ENCODE measurements at regions of chr2 and their contacts with region 1.

Region 1: GRCh38 chr2:40760071-40760666 is 308.3 kb upstream of the SLC8A1 start:
- DNase-seq: peak; percentile 44 to 46
- H3K4me3 ChIP-seq: no peak overlapping the region
- H3K27ac ChIP-seq: no peak overlapping the region
- H3K4me1 ChIP-seq: no peaks in the 10 kb centered on the region
- H3K27me3 ChIP-seq: no peaks in the 10 kb centered on the region
- CTCF ChIP-seq: peak; percentile 95

Region 2: GRCh38 chr2:40178971-40179370 is 581.2 kb before region 1 on chr2:
- CTCF ChIA-PET with region 1: no interaction called
- POLR2A ChIA-PET with region 1: interaction called, 10 read pairs
- intact Hi-C with region 1: no loop called
- DNase-seq: no peak
- H3K4me3 ChIP-seq: no peak overlapping the region
- H3K27ac ChIP-seq: no peak overlapping the region
- H3K4me1 ChIP-seq: no peaks in the 10 kb centered on the region
- H3K27me3 ChIP-seq: no peaks in the 10 kb centered on the region
- CTCF ChIP-seq: no peak

Region 3: GRCh38 chr2:40244675-40245074 is 515.5 kb before region 1 on chr2:
- CTCF ChIA-PET with region 1: no interaction called
- POLR2A ChIA-PET with region 1: no interaction called
- intact Hi-C with region 1: loop called (anchors 10 kb)
- DNase-seq: peak; percentile 43 to 55
- H3K4me3 ChIP-seq: no peak overlapping the region
- H3K27ac ChIP-seq: no peak overlapping the region
- H3K4me1 ChIP-seq: no peaks in the 10 kb centered on the region
- H3K27me3 ChIP-seq: no peaks in the 10 kb centered on the region
- CTCF ChIP-seq: peak; percentile 78

Region 4: GRCh38 chr2:40488101-40488601 is 272.0 kb before region 1 on chr2:
- CTCF ChIA-PET with region 1: no interaction called
- POLR2A ChIA-PET with region 1: no interaction called
- intact Hi-C with region 1: loop called (anchors 1 kb)
- DNase-seq: no peak
- H3K4me3 ChIP-seq: no peak overlapping the region
- H3K27ac ChIP-seq: no peak overlapping the region
- H3K4me1 ChIP-seq: no peaks in the 10 kb centered on the region
- H3K27me3 ChIP-seq: no peaks in the 10 kb centered on the region
- CTCF ChIP-seq: peak; percentile 81

Region 5: GRCh38 chr2:40554668-40555285 is 205.4 kb before region 1 on chr2:
- CTCF ChIA-PET with region 1: no interaction called
- POLR2A ChIA-PET with region 1: no interaction called
- intact Hi-C with region 1: loop called (anchors 2 kb)
- DNase-seq: peak; percentile 45 to 62
- H3K4me3 ChIP-seq: no peak overlapping the region
- H3K27ac ChIP-seq: no peak overlapping the region
- H3K4me1 ChIP-seq: no peaks in the 10 kb centered on the region
- H3K27me3 ChIP-seq: no peaks in the 10 kb centered on the region
- CTCF ChIP-seq: peak; percentile 97

Region 6: GRCh38 chr2:40668425-40668824 is 91.7 kb before region 1 on chr2:
- CTCF ChIA-PET with region 1: no interaction called
- POLR2A ChIA-PET with region 1: no interaction called
- intact Hi-C with region 1: no loop called
- DNase-seq: no peak
- H3K4me3 ChIP-seq: no peak overlapping the region
- H3K27ac ChIP-seq: no peak overlapping the region
- H3K4me1 ChIP-seq: no peaks in the 10 kb centered on the region
- H3K27me3 ChIP-seq: no peaks in the 10 kb centered on the region
- CTCF ChIP-seq: no peak

Region 7: GRCh38 chr2:41782306-41783158 is 1022.4 kb after region 1 on chr2:
- CTCF ChIA-PET with region 1: no interaction called
- POLR2A ChIA-PET with region 1: no interaction called
- intact Hi-C with region 1: loop called (anchors 5 kb)
- DNase-seq: peak in 1 of 2 experiments; percentile 24
- H3K4me3 ChIP-seq: no peak overlapping the region
- H3K27ac ChIP-seq: no peak overlapping the region
- H3K4me1 ChIP-seq: no peaks in the 10 kb centered on the region
- H3K27me3 ChIP-seq: peaks cover 26% of the 10 kb centered on the region; the same call in 1 of the 2 replicates
- CTCF ChIP-seq: peak; percentile 97